ENCODE measurements at regions of chr11 and their contacts with region 1.

Region 1: GRCh38 chr11:27296497-27296896 is 66.5 kb downstream of the CCDC34 start:
- DNase-seq: no peak
- H3K4me3 ChIP-seq: no peak overlapping the region
- CTCF ChIP-seq: peak; percentile 62

Region 2: GRCh38 chr11:26849036-26849435 is 447.5 kb before region 1 on chr11:
- CTCF ChIA-PET with region 1: no interaction called
- POLR2A ChIA-PET with region 1: no interaction called
- DNase-seq: no peak
- H3K4me3 ChIP-seq: no peak overlapping the region
- CTCF ChIP-seq: no peak

Region 3: GRCh38 chr11:27158722-27159679 is 137.5 kb before region 1 on chr11:
- CTCF ChIA-PET with region 1: interaction called, 12 read pairs
- POLR2A ChIA-PET with region 1: no interaction called
- DNase-seq: peak; percentile 46
- H3K4me3 ChIP-seq: no peak overlapping the region
- CTCF ChIP-seq: peak; percentile 64

Region 4: DNA sequence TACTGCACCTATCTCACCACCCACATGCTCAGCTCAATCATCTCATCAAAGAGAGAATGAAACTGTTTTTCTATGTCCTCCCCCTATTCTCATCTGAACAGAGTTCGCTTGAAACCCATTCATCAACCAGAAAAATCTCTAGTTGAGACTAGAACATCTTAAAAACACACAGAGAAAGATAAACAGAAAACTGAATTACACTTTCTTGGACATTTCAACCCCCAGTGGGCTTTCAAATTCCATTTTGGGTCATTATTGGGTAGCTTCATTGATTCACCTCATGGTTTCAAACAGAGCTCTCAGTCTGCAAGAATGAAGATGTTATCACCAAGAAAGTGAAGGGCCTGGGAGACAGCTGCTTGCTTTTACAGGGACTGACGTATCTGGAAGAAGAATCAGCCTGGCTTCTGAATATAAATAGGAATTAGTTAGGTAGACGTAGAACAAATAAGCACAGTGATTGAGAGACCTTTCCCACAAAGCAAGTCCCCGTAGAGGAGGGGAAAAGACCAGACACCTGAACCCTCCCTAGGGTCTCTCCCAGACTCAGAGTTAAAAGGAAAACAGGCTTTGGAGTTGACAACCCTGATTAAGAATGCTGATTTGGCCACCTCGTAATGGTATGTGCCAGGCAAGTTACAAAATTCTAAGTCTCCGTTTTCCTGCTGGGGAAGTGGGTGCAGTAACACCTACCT is 100.1 kb before region 1 on chr11:
- CTCF ChIA-PET with region 1: interaction called, 30 read pairs
- POLR2A ChIA-PET with region 1: no interaction called
- DNase-seq: peak; percentile 67
- H3K4me3 ChIP-seq: no peak overlapping the region
- CTCF ChIP-seq: no peak

Region 5: DNA sequence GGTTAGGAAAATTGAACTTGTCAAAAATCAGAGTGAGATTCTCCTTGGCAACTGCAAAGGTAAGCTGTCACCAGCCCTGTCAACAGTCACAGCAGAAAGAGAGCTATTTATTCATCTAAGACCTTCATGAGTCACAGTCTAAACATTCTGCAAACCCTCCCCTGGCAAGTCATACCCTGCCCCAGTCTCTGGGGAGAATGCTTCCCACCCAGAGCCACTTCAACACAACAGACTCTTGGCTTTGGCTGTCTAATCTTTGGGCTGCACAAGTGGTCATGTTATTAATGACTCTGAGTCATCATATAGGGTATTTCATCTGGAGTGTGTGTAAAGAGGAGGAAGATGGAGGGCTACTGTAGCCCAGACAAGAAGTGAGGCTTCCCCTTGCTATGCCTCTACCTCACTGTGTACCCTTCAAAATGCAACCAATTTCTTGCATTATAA is 86.9 kb before region 1 on chr11:
- CTCF ChIA-PET with region 1: interaction called, 14 read pairs
- POLR2A ChIA-PET with region 1: no interaction called
- DNase-seq: peak; percentile 78
- H3K4me3 ChIP-seq: no peak overlapping the region
- CTCF ChIP-seq: no peak

Region 6: DNA sequence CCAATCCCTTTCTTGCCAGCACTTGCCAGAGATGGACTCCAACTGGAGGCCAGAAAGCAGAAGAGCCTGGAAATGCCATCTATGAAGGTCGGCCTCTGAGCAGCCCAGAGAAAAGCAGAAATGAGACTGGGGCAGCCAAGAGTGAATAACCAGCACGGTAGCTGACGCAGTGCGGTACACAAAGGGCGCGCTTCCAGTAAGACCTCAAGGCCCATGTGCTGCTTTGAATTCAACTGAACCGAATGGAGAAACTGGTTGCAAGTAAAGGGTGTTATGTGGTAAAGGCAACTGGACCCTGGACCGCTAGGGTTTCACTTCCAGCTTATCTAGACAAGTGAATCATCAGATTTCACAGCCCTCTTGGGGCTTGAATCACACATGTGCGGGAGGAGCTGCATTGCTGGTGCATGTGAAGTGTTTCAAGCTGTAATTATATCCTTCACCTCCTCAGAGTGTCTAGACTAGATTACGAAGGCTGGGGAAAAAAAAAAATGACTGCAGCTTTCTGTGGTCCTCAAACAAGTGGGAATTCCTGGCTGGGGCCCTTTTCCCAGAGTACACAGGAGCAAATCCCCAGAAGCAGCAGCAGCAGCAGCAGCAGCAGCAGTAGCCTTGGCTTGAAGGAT is 62.3 kb before region 1 on chr11:
- CTCF ChIA-PET with region 1: interaction called, 15 read pairs
- POLR2A ChIA-PET with region 1: no interaction called
- DNase-seq: peak; percentile 100
- H3K4me3 ChIP-seq: peak overlapping the region; percentile 41
- CTCF ChIP-seq: no peak

Region 7: GRCh38 chr11:27313157-27313821 is 16.8 kb after region 1 on chr11:
- CTCF ChIA-PET with region 1: interaction called, 86 read pairs
- POLR2A ChIA-PET with region 1: no interaction called
- DNase-seq: no peak
- H3K4me3 ChIP-seq: no peak overlapping the region
- CTCF ChIP-seq: no peak